Posterior cingulate gyrus (tissue), 11 donors: ENCODE measurements at regions of chr17 and their contacts with region 1.

Region 1: DNA sequence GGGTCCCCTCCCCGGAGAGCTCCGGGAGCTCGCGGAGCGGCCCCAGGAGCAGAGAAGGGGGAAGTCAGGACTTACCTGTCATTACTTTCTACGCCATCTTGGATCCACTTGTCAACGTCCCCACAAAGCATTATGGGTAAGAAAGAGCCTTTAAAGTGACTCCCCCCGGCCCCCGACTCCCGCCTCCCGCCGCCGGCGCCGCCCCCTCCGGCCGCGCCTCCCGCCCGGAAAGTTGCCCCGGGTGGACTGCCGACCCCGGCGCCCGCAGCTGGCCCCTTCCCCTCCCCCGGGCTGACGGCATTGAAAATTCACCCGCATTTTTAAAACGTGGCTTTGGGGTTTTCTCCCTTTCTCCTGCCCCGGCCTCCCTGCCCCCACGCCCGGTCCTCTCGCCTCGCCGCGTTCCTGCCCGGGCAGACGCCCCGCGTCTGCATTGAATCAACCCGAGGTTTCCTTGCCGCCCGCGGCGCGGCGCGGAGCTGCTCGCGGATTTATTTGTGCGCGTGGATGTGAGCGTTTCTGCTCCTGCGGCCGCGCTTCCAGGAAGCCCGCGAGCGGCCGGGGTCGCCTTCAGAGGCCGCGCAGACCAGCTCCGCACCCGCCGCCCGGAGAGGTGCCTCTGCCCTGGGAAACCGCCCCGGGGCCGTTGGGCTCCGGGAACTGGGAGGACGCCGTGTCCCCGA is at the start of gene HELZ:
- DNase-seq: peak; percentile 38 to 93 (median 60)

Region 2: DNA sequence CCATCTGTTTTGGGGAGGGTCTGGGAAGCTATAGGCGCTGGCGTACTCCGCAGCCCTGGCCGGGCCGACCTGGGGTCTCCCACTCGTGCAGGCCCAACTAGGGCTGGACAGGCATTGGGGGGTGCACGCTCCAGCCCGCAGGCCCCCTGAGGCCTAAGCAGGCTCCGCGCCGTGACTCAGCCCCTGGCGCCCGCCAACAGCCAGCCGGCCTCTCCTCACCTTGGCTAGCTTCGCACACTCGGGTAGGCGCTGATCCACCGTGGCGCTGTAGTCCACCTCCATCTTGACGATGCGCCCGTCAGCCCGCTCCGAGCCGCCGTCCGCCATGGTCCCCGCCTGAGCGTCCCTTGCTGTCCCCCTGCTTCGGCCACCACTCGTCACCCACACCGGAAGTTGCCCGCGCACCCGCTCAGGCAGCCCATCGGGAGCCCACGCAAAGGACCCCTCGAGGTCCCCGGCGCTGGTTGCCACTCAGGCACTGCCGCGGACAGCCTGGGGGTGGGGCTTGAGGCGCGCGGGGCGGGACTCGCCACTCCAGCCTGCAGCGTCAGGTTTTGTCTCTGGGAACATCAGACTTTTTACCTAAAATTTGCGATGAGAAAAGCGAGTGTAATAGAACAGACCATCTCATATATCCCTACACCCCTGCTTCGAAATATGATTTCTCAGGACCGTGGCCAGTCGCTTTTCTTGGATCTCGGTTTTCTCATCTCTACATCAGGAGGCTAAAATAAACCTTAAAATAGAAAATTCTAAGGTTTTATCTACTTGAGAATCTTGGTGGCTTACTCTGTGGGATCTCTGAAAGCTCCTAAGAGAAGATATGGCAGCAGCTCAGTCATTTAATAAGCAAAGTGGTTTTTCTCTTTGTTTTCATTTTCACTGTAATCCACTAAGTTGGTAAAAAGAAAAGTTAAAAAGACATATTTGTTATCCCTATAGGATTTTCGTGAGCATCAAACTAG is 121.3 kb after region 1 on chr17 and contains the start of gene PSMD12:
- intact Hi-C with region 1: loop called (anchors 10 kb)
- DNase-seq: peak; percentile 92 to 99 (median 95)

Region 3: GRCh38 chr17:67528751-67529436 is 283.7 kb after region 1 on chr17:
- intact Hi-C with region 1: no loop called
- DNase-seq: peak; percentile 54 to 95 (median 80)